ENCODE measurements at regions of chr4 and their contacts with region 1.

Region 1: DNA sequence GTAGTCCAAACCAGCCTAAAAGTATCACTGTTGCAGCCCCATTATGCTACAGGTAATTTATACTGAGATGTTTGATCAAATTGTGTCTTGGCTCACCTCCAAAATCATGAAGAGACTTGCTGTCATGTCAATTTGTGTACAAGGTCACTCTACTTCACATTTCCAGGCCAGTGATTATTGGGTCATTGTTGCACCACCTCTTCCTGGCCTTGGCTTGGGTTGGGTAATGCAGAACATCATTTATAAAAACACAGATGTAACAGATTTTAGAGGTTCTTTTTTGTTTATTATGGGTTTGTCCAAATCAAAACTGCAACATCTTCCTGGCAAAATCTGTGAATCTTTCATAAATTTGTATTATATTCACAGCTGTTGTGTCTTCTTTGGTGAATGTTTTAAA is 459.5 kb downstream of the ANKRD50 start:
- DNase-seq: no peak
- ATAC-seq: no peak
- H3K4me3 ChIP-seq: no peak overlapping the region
- H3K27ac ChIP-seq: no peak overlapping the region
- H3K4me1 ChIP-seq: no peaks in the 10 kb centered on the region
- H3K27me3 ChIP-seq: no peaks in the 10 kb centered on the region
- CTCF ChIP-seq: no peak
- POLR2A ChIP-seq: no peak
- RAD21 ChIP-seq: no peak

Region 2: GRCh38 chr4:123102897-123103471 is 1150.1 kb before region 1 on chr4:
- CTCF ChIA-PET with region 1: no interaction called
- POLR2A ChIA-PET with region 1: no interaction called
- dilution Hi-C with region 1: no loop called
- in situ Hi-C with region 1: loop called (anchors 10 kb)
- intact Hi-C with region 1: no loop called
- DNase-seq: peak; percentile 69
- ATAC-seq: peak; percentile 89
- H3K4me3 ChIP-seq: no peak overlapping the region
- H3K27ac ChIP-seq: no peak overlapping the region
- H3K4me1 ChIP-seq: no peaks in the 10 kb centered on the region
- H3K27me3 ChIP-seq: no peaks in the 10 kb centered on the region
- CTCF ChIP-seq: peak; percentile 71
- POLR2A ChIP-seq: no peak
- RAD21 ChIP-seq: peak; percentile 81

Region 3: GRCh38 chr4:123776254-123776653 is 476.8 kb before region 1 on chr4:
- CTCF ChIA-PET with region 1: no interaction called
- POLR2A ChIA-PET with region 1: no interaction called
- dilution Hi-C with region 1: no loop called
- in situ Hi-C with region 1: loop called (anchors 10 kb)
- intact Hi-C with region 1: no loop called
- DNase-seq: no peak
- ATAC-seq: no peak
- H3K4me3 ChIP-seq: no peak overlapping the region
- H3K27ac ChIP-seq: no peak overlapping the region
- H3K4me1 ChIP-seq: peaks cover 4% of the 10 kb centered on the region; the same call in 1 of the 2 replicates
- H3K27me3 ChIP-seq: no peaks in the 10 kb centered on the region
- CTCF ChIP-seq: no peak
- POLR2A ChIP-seq: no peak
- RAD21 ChIP-seq: no peak

Region 4: GRCh38 chr4:124449881-124450280 is 196.8 kb after region 1 on chr4:
- CTCF ChIA-PET with region 1: no interaction called
- POLR2A ChIA-PET with region 1: no interaction called
- dilution Hi-C with region 1: no loop called
- in situ Hi-C with region 1: no loop called
- intact Hi-C with region 1: no loop called
- DNase-seq: no peak
- ATAC-seq: no peak
- H3K4me3 ChIP-seq: no peak overlapping the region
- H3K27ac ChIP-seq: no peak overlapping the region
- H3K4me1 ChIP-seq: peaks cover 2% of the 10 kb centered on the region; the same call in 1 of the 2 replicates
- H3K27me3 ChIP-seq: no peaks in the 10 kb centered on the region
- CTCF ChIP-seq: no peak
- POLR2A ChIP-seq: no peak
- RAD21 ChIP-seq: no peak

Region 5: DNA sequence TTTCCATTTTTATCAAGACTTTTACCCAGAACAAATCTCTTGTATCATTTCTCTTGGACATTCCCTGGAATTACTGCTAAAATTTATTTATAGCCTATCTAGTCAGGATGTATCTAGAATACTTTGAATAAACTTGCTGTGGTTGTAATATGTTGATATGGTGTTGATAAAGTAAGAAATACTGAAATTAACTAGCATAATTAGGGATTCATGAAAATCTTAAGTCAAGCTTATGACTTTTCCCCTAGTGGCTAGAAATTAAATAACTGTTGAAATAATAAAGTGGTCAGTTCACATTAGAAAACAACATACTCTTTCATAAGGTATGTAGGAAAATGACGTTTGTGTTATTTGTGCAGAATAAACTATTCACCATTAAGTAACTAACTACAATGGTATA is 532.6 kb after region 1 on chr4:
- CTCF ChIA-PET with region 1: no interaction called
- POLR2A ChIA-PET with region 1: no interaction called
- dilution Hi-C with region 1: no loop called
- in situ Hi-C with region 1: no loop called
- intact Hi-C with region 1: no loop called
- DNase-seq: no peak
- ATAC-seq: no peak
- H3K4me3 ChIP-seq: no peak overlapping the region
- H3K27ac ChIP-seq: no peak overlapping the region
- H3K4me1 ChIP-seq: peaks cover 3% of the 10 kb centered on the region; the same call in 1 of the 2 replicates
- H3K27me3 ChIP-seq: no peaks in the 10 kb centered on the region
- CTCF ChIP-seq: no peak
- POLR2A ChIP-seq: no peak
- RAD21 ChIP-seq: no peak